ENCODE measurements at regions of chr18 and their contacts with region 1.

Region 1: DNA sequence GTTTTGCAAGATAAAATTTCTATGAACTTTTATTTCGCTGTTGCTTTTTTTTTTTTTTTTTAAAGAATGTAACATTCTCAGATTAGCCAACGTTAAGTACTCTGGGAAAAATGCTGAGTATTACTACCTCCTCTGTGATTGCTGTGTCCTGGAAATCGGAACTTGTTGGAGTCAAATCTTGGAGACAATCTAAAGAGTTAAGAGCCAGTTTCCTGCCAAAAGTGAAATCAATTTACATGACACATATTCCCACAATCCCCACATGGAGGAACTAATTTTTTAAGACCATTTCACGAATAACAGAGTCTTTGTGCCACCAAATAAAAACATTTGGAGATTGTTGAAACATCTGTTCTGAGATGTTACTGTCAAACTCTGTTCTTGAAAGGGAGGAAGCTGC is 127.8 kb downstream of the MEP1B start:
- DNase-seq: no peak
- H3K4me3 ChIP-seq: no peak overlapping the region
- H3K27ac ChIP-seq: peak overlapping the region in 1 of 2 donors; percentile 46
- H3K4me1 ChIP-seq: peaks cover 0 to 21% of the 10 kb centered on the region in 2 donors
- H3K27me3 ChIP-seq: no peaks in the 10 kb centered on the region
- CTCF ChIP-seq: no peak

Region 2: GRCh38 chr18:32195881-32196815 is 121.5 kb before region 1 on chr18:
- intact Hi-C with region 1: no loop called
- DNase-seq: no peak
- H3K4me3 ChIP-seq: no peak overlapping the region
- H3K27ac ChIP-seq: no peak overlapping the region
- H3K4me1 ChIP-seq: no peaks in the 10 kb centered on the region
- H3K27me3 ChIP-seq: no peaks in the 10 kb centered on the region
- CTCF ChIP-seq: no peak

Region 3: GRCh38 chr18:32276906-32277305 is 40.7 kb before region 1 on chr18:
- intact Hi-C with region 1: loop called (anchors 5 kb)
- DNase-seq: no peak
- H3K4me3 ChIP-seq: no peak overlapping the region
- H3K27ac ChIP-seq: peak overlapping the region; percentile 77 to 91
- H3K4me1 ChIP-seq: peaks cover 3 to 28% of the 10 kb centered on the region in 2 donors
- H3K27me3 ChIP-seq: no peaks in the 10 kb centered on the region
- CTCF ChIP-seq: no peak

Region 4: DNA sequence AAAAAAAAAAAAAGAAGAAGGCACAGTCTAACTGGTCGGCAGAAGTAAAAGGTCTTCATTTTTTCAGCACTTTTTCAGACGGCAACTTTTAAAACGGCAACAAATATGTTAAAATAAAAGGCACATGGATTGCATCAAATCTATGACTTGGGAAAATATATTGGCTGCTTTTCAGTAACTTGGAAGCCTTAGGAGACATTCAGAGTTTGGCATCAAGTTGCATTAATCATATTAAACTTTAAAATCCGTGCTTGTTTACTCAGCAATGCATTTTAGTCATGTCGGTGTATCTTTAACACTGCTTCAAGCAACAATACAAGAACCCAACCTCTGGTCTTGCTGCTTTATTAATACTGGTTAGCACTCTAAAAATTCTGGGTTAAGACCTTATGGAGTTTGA is 16.7 kb before region 1 on chr18:
- intact Hi-C with region 1: no loop called
- DNase-seq: no peak
- H3K4me3 ChIP-seq: no peak overlapping the region
- H3K27ac ChIP-seq: peak overlapping the region; percentile 82 to 91
- H3K4me1 ChIP-seq: peaks cover 4 to 21% of the 10 kb centered on the region in 2 donors
- H3K27me3 ChIP-seq: no peaks in the 10 kb centered on the region
- CTCF ChIP-seq: no peak

Measured in ascending aorta (tissue), 2 donors.